Thyroid gland (tissue), 4 donors: ENCODE measurements at regions of chr2 and their contacts with region 1.

Region 1: DNA sequence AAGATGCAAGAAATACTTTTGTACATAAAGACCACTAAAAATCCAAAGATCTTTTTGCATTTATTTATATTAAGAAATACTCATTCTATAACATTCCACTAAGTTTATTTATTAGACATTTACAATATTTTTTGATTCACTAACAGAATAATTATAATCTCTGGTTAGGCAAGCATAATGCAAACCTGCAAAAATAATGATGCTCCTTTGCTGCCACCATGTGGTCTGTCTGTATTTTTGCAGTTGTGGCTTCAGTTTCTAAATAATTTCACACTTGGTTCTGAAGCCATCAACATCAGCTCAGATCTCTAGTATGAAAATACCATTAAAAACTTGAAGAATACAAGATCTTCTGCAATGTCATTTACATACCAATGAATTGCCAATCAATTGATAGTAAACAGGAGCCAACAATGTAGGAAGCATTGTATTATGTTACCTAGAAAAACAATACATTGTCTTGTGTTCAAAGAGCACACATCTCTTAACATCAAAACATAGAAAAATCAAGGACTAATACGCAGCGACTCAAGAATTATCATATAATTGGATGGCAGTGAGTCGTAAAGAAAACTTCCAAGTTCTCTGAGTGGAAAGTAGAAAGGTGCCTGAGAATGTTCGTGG is 28.8 kb upstream of the WDR75 start:
- DNase-seq: peak; percentile 13 to 32
- H3K4me3 ChIP-seq: no peak overlapping the region
- H3K27ac ChIP-seq: no peak overlapping the region
- H3K4me1 ChIP-seq: peaks cover 8 to 9% of the 10 kb centered on the region in 2 donors
- H3K27me3 ChIP-seq: no peaks in the 10 kb centered on the region
- CTCF ChIP-seq: peak; percentile 33 to 81 (median 64)
- POLR2A ChIP-seq: no peak

Region 2: DNA sequence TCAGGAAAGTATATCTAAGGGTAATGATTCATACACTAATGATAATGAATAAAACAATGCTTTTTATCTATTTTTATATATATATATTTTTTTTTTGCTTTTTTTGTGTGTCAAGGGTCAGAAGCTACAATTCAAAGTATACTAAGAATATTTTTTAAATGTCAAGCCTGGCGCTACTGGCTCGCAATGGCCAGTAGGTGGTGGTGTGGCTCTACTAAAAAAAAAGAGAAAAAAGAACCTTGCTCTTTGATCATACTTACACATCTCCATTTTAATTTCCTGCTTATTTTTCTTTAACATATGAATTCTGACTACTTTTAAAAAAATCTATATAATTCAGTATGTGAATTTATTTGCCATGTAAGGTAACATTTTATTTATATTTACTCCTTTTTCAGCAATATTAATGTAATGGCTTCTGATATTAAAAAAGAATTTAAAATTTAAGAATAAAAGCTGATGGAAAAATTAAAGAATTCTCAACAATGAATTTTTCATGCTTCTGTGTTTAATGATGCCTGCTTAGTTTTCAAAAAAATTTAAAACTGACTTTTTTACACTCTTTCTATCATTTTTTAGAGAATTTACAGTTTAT is 887.8 kb before region 1 on chr2:
- intact Hi-C with region 1: loop called (anchors 10 kb)
- DNase-seq: peak; percentile 16 to 18
- H3K4me3 ChIP-seq: no peak overlapping the region
- H3K27ac ChIP-seq: no peak overlapping the region
- H3K4me1 ChIP-seq: no peaks in the 10 kb centered on the region
- H3K27me3 ChIP-seq: no peaks in the 10 kb centered on the region
- CTCF ChIP-seq: peak; percentile 56 to 84 (median 74)
- POLR2A ChIP-seq: no peak

Region 3: GRCh38 chr2:189092936-189093335 is 319.5 kb before region 1 on chr2:
- intact Hi-C with region 1: loop called (anchors 5 kb)
- DNase-seq: no peak
- H3K4me3 ChIP-seq: no peak overlapping the region
- H3K27ac ChIP-seq: peak overlapping the region in 1 of 3 donors; percentile 41
- H3K4me1 ChIP-seq: no peaks in the 10 kb centered on the region
- H3K27me3 ChIP-seq: no peaks in the 10 kb centered on the region
- CTCF ChIP-seq: no peak
- POLR2A ChIP-seq: no peak

Region 4: GRCh38 chr2:189287982-189288521 is 124.4 kb before region 1 on chr2:
- intact Hi-C with region 1: loop called (anchors 5 kb)
- DNase-seq: no peak
- H3K4me3 ChIP-seq: no peak overlapping the region
- H3K27ac ChIP-seq: no peak overlapping the region
- H3K4me1 ChIP-seq: no peaks in the 10 kb centered on the region
- H3K27me3 ChIP-seq: no peaks in the 10 kb centered on the region
- CTCF ChIP-seq: peak in 4 of 6 experiments; percentile 16 to 78 (median 59)
- POLR2A ChIP-seq: no peak